Mammary epithelial cell (primary cell): ENCODE measurements at regions of chr3 and their contacts with region 1.

Region 1: GRCh38 chr3:160565442-160566403 is at the start of gene KPNA4:
- DNase-seq: peak; percentile 97
- H3K4me3 ChIP-seq: peak within 1 kb of the TSS; percentile 72 to 91 (median 85)
- H3K27ac ChIP-seq: peak within 1 kb of the TSS; percentile 97
- H3K4me1 ChIP-seq: peaks cover 7% of the 10 kb centered on the region
- H3K27me3 ChIP-seq: no peaks in the 10 kb centered on the region
- CTCF ChIP-seq: no peak
- total RNA-seq, gene KPNA4: 54.0 to 104 TPM

Region 2: GRCh38 chr3:160676547-160677303 is 111.0 kb after region 1 on chr3 and contains the start of gene ARL14:
- CTCF ChIA-PET with region 1: no interaction called
- dilution Hi-C with region 1: no loop called
- in situ Hi-C with region 1: no loop called
- intact Hi-C with region 1: loop called (anchors 1 kb)
- DNase-seq: peak; percentile 95
- H3K4me3 ChIP-seq: no peak within 1 kb of the TSS
- H3K27ac ChIP-seq: peak within 1 kb of the TSS; percentile 90
- H3K4me1 ChIP-seq: peaks cover 32% of the 10 kb centered on the region
- H3K27me3 ChIP-seq: no peaks in the 10 kb centered on the region
- CTCF ChIP-seq: no peak
- total RNA-seq, gene ARL14: 0.17 to 0.31 TPM

Region 3: GRCh38 chr3:161220850-161221753 is 655.4 kb after region 1 on chr3 and contains the start of gene NMD3:
- CTCF ChIA-PET with region 1: no interaction called
- dilution Hi-C with region 1: no loop called
- in situ Hi-C with region 1: no loop called
- intact Hi-C with region 1: loop called (anchors 10 kb)
- DNase-seq: peak; percentile 91
- H3K4me3 ChIP-seq: peak within 1 kb of the TSS; percentile 93 to 97 (median 96)
- H3K27ac ChIP-seq: peak within 1 kb of the TSS; percentile 93
- H3K4me1 ChIP-seq: peaks cover 10% of the 10 kb centered on the region
- H3K27me3 ChIP-seq: no peaks in the 10 kb centered on the region
- CTCF ChIP-seq: no peak
- total RNA-seq, gene NMD3: 74.4 to 112 TPM

Region 4: GRCh38 chr3:161409069-161409468 is 843.3 kb after region 1 on chr3:
- CTCF ChIA-PET with region 1: no interaction called
- dilution Hi-C with region 1: no loop called
- in situ Hi-C with region 1: loop called in 1 of 2 experiments (anchors 10 kb)
- intact Hi-C with region 1: no loop called
- DNase-seq: peak; percentile 57
- H3K4me3 ChIP-seq: no peak overlapping the region
- H3K27ac ChIP-seq: peak overlapping the region; percentile 44
- H3K4me1 ChIP-seq: peaks cover 36% of the 10 kb centered on the region
- H3K27me3 ChIP-seq: no peaks in the 10 kb centered on the region
- CTCF ChIP-seq: peak; percentile 69 to 72